Sciatic nerve (tissue), 2 donors: ENCODE measurements at regions of chr3 and their contacts with region 1.

Region 1: DNA sequence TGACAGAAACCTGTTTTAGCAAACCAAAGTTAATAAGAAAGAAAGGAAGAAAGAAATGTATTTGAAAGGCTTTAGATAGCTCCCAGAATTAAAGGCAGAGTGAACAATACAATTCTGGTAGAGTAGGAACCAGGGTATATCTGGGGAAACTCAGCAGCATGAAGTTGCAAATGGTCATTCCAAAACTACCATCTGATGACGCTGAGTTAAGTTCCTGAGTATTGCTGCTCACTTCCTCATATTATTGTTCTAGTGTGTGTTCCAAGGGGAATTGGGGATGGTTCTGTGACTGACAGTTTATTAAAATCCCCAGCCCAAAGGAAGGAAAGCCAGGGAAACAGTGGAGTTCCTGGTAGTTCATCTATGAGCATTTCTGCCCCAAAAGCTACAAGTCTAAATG is 88.3 kb upstream of the FRMD4B start:
- DNase-seq: no peak
- ATAC-seq: peak; percentile 57

Region 2: DNA sequence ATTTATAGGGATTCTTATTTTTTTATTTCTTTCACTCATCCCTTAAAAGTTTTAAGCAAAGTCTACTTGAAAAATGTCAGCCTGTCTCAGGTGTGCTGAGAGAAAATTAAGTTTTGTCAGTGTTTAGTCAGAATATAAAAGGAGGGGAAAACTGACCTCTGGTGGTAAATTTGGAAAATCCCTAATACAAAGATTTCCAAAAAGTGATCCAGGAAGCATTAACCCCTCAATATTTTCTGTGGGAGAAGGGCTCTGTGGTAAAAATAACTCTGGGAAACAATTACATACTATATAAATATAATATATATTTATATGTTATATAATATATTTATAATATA is 47.2 kb before region 1 on chr3:
- intact Hi-C with region 1: loop called (anchors 2 kb)
- DNase-seq: no peak
- ATAC-seq: no peak